Activated T-helper 1 cell treated with anti-CD3 and anti-CD28 coated beads, Interleukin-12 subunit alpha, Interleukin-12 subunit beta, Interleukin-2, Interleukin-4 antibody, amounts not matched to agents 30 ng/mL and 10 ng/mL and 1 ng/mL, durations not matched to agents 14 hours and 24 hours and 36 hours (primary cell): ENCODE measurements at regions of chr10 and their contacts with region 1.

Region 1: GRCh38 chr10:75042292-75042974 is 69.0 kb upstream of the SAMD8 start:
- DNase-seq: no peak
- H3K4me3 Mint-ChIP-seq: peak overlapping the region; percentile 19
- H3K27ac Mint-ChIP-seq: peak overlapping the region; percentile 91
- H3K4me1 Mint-ChIP-seq: peaks cover 41% of the 10 kb centered on the region
- H3K27me3 Mint-ChIP-seq: no peaks in the 10 kb centered on the region

Region 2: GRCh38 chr10:75029857-75030256 is 12.6 kb before region 1 on chr10:
- intact Hi-C with region 1: loop called (anchors 1 kb)
- DNase-seq: no peak
- H3K4me3 Mint-ChIP-seq: no peak overlapping the region
- H3K27ac Mint-ChIP-seq: peak overlapping the region; percentile 5
- H3K4me1 Mint-ChIP-seq: peaks cover 22% of the 10 kb centered on the region
- H3K27me3 Mint-ChIP-seq: no peaks in the 10 kb centered on the region

Region 3: DNA sequence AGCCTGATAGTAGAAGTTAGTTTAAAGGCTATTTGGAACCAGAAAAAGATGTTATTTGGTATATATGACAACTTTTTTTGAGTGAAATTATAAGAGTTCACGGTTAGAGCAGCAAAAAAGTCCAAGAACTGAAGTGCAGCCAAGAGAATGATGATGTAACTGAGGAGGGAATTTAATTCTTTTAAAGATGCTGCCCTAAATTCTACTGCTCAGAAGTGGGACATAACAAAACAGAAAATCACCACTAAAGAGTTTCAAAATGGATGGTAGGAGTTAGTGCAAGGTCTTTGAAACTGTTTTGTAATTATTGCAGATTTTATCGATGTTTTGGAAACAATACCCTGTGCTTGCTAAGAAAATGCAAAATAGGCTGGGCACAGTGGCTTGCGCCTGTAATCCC is 75.6 kb after region 1 on chr10:
- intact Hi-C with region 1: no loop called
- DNase-seq: no peak
- H3K4me3 Mint-ChIP-seq: no peak overlapping the region
- H3K27ac Mint-ChIP-seq: no peak overlapping the region
- H3K4me1 Mint-ChIP-seq: peaks cover 26% of the 10 kb centered on the region
- H3K27me3 Mint-ChIP-seq: no peaks in the 10 kb centered on the region